ENCODE measurements at regions of chr9 and their contacts with region 1.

Region 1: DNA sequence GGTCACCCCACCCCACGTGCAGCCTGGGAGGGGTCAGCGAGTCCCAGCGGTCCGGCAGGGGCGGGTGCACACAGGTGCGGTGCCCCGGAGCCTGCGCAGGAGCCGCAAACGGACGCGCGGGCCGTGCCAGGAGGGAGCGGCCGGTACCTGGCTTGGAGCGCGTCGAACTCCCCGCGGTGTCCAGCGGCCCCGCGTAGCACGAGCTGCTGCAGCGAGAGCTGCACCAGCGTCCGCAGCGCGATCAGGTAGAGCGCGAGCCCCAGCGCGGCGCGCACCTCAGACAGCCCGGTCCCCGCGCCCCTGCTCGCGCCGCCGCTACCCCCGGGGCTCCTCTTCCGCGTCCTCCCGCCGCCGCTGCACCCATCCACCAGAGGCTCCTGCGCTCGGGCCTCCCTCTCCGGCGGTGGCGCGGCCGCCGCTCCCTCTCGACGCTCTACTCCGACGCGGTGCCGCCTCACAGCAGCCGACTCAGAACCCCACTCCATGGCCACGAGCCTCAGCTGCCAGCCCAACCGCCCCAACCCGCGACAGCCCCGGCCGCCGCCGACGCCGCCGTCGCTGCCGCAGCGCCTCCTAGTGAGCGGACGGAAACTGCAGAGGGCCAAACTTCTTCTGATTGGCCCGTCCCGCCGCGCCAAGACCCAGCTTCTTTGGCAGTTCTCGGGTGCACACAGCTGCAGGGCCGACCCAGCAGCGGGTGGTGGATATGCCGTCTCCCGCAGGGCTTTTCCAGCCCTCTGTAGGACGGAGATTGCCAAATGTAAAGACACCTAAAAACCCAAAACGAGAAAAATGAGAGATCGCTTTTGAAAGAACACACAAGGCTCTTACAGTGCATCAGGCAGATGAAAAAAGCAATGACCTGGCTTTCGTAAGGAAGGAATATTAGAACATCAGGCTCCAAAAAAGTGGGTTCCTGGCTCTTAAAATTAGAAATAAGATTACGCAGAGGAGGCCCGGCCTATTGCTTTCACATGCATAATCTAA is at the start of gene ERMP1:
- DNase-seq: peak; percentile 90
- ATAC-seq: peak; percentile 87
- H3K4me3 Mint-ChIP-seq: peak within 1 kb of the TSS; percentile 86
- H3K27ac Mint-ChIP-seq: no peak within 1 kb of the TSS
- H3K4me1 Mint-ChIP-seq: peaks cover 28% of the 10 kb centered on the region
- H3K27me3 Mint-ChIP-seq: no peaks in the 10 kb centered on the region; the same call in 1 of the 2 replicates
- CTCF ChIP-seq: peak; percentile 73
- total RNA-seq, gene ERMP1: 25.4 to 28.8 TPM (median 28.8 TPM) in 3 replicates

Region 2: DNA sequence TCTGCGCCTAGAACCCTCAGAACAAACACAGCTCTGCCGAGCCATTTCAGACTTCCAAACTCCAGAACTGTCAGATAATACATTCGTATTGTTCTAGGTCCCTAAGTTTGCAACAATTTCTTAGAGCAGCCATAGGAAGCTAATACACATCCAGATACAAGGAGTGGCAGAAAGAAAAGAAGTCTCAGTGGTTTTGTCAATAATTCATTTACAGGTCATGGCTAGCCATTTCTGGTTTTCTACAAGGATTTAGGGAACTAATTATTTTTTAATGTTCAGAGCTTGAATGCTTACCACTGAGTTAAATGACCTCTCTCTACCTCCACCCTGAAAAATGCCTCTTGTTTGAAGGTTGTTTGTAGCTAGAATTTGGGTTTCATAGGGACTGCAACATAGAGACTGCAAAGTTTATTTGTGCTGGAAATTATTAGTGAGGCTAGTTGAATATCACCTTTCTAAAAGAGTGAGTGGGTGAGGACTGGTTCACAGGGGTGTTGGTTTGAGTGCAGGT is 15.6 kb after region 1 on chr9:
- CTCF ChIA-PET with region 1: interaction called, 10 read pairs
- POLR2A ChIA-PET with region 1: no interaction called
- DNase-seq: no peak
- ATAC-seq: no peak
- H3K4me3 Mint-ChIP-seq: no peak overlapping the region
- H3K27ac Mint-ChIP-seq: no peak overlapping the region
- H3K4me1 Mint-ChIP-seq: peaks cover 9% of the 10 kb centered on the region
- H3K27me3 Mint-ChIP-seq: no peaks in the 10 kb centered on the region; the same call in 1 of the 2 replicates
- CTCF ChIP-seq: no peak

Region 3: GRCh38 chr9:5988265-5988664 is 155.4 kb after region 1 on chr9:
- CTCF ChIA-PET with region 1: no interaction called
- POLR2A ChIA-PET with region 1: no interaction called
- DNase-seq: no peak
- ATAC-seq: no peak
- H3K4me3 Mint-ChIP-seq: no peak overlapping the region
- H3K27ac Mint-ChIP-seq: no peak overlapping the region
- H3K4me1 Mint-ChIP-seq: peaks cover 19% of the 10 kb centered on the region
- H3K27me3 Mint-ChIP-seq: no peaks in the 10 kb centered on the region
- CTCF ChIP-seq: no peak

Region 4: GRCh38 chr9:6008169-6008979 is 175.5 kb after region 1 on chr9:
- CTCF ChIA-PET with region 1: interaction called, 10 read pairs
- POLR2A ChIA-PET with region 1: interaction called, 3 read pairs
- DNase-seq: peak; percentile 91
- ATAC-seq: peak; percentile 71
- H3K4me3 Mint-ChIP-seq: peak overlapping the region; percentile 68
- H3K27ac Mint-ChIP-seq: peak overlapping the region; percentile 94
- H3K4me1 Mint-ChIP-seq: peaks cover 29% of the 10 kb centered on the region
- H3K27me3 Mint-ChIP-seq: no peaks in the 10 kb centered on the region
- CTCF ChIP-seq: no peak

Measured in WTC11 (cell line).